Spleen (tissue), 13 donors: ENCODE measurements at regions of chr6 and their contacts with region 1.

Region 1: DNA sequence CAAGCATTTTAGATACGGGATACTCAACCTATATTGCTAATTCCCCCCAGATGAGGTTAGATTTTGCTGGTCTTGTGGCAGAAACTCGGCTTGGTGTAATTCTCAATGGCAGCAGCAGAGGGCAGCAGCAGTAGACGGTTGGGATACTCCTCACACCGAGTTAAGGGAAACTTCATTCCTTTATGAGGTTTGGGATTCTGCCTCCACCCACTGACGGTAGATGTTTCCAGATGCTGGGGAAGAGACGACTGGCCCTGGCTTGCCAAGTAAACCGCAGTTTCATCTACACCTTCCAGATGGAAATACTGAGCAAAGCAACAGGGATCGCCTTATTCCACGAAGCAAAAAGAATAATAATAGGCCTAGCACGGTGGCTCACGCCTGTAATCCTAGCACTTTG is 8.2 kb upstream of the TBC1D7 start:
- DNase-seq: peak; percentile 87
- H3K4me3 ChIP-seq: no peak overlapping the region
- H3K27ac ChIP-seq: peak overlapping the region in 1 of 8 donors; percentile 16
- H3K4me1 ChIP-seq: peaks cover 4 to 55% (median 17%) of the 10 kb centered on the region in 6 donors
- H3K27me3 ChIP-seq: no peaks in the 10 kb centered on the region
- CTCF ChIP-seq: peak; percentile 76 to 98 (median 91)
- POLR2A ChIP-seq: no peak

Region 2: DNA sequence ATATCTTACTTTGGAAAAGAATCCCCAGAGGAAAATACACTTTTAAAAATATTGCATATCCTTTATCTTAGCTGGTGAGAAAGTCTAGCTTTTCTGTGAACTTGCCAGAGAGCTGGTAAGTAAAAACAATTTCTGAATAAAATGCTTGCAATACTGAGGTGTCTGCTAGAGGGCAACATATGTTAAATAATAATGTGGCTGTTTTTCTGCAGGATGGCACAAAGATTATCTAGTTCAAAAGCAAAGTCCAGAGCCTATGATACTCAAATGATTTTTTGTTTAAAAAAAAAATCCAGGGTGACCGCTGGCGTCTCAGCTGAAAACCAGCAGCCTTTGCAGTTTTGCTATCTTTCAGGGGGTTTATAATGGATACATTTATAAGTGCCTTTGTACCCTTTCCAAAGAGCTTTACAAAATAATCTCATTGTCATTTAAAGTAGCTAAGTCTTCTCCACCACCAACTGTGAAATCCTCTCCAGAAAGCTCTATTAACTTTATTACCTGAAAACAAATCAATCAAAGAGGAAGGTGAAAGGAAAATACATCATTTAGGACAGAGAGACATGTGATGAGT is 425.1 kb before region 1 on chr6:
- intact Hi-C with region 1: loop called (anchors 2 kb)
- DNase-seq: no peak
- H3K4me3 ChIP-seq: no peak overlapping the region
- H3K27ac ChIP-seq: no peak overlapping the region
- H3K4me1 ChIP-seq: peaks cover 0 to 4% (median 0%) of the 10 kb centered on the region in 6 donors
- H3K27me3 ChIP-seq: no peaks in the 10 kb centered on the region
- CTCF ChIP-seq: peak in 9 of 11 experiments; percentile 20 to 60 (median 51)
- POLR2A ChIP-seq: no peak

Region 3: GRCh38 chr6:13194852-13195251 is 141.7 kb before region 1 on chr6:
- intact Hi-C with region 1: loop called (anchors 10 kb)
- DNase-seq: no peak
- H3K4me3 ChIP-seq: no peak overlapping the region
- H3K27ac ChIP-seq: no peak overlapping the region
- H3K4me1 ChIP-seq: peaks cover 0 to 9% (median 3%) of the 10 kb centered on the region in 6 donors
- H3K27me3 ChIP-seq: no peaks in the 10 kb centered on the region
- CTCF ChIP-seq: peak in 10 of 11 experiments; percentile 16 to 60 (median 44)
- POLR2A ChIP-seq: no peak

Region 4: GRCh38 chr6:13383328-13384163 is 47.0 kb after region 1 on chr6:
- intact Hi-C with region 1: loop called (anchors 10 kb)
- DNase-seq: no peak
- H3K4me3 ChIP-seq: peak overlapping the region in 1 of 8 donors; percentile 18
- H3K27ac ChIP-seq: peak overlapping the region in 6 of 8 donors; percentile 25 to 74 (median 54)
- H3K4me1 ChIP-seq: peaks cover 14 to 62% (median 26%) of the 10 kb centered on the region in 6 donors
- H3K27me3 ChIP-seq: no peaks in the 10 kb centered on the region
- CTCF ChIP-seq: peak in 7 of 11 experiments; percentile 15 to 53 (median 37)
- POLR2A ChIP-seq: no peak

Region 5: GRCh38 chr6:13487122-13488014 is 150.8 kb after region 1 on chr6 and contains the start of gene GFOD1:
- intact Hi-C with region 1: loop called (anchors 10 kb)
- DNase-seq: peak; percentile 98
- H3K4me3 ChIP-seq: peak within 1 kb of the TSS; percentile 68 to 99 (median 94)
- H3K27ac ChIP-seq: peak within 1 kb of the TSS; percentile 90 to 97 (median 94)
- H3K4me1 ChIP-seq: peaks cover 9 to 58% (median 37%) of the 10 kb centered on the region in 6 donors
- H3K27me3 ChIP-seq: no peaks in the 10 kb centered on the region
- CTCF ChIP-seq: peak in 5 of 11 experiments; percentile 10 to 31 (median 14)
- POLR2A ChIP-seq: peak in 1 of 3 donors; percentile 93
- total RNA-seq, gene GFOD1: 16.0 to 54.0 (median 37.4) TPM

Region 6: DNA sequence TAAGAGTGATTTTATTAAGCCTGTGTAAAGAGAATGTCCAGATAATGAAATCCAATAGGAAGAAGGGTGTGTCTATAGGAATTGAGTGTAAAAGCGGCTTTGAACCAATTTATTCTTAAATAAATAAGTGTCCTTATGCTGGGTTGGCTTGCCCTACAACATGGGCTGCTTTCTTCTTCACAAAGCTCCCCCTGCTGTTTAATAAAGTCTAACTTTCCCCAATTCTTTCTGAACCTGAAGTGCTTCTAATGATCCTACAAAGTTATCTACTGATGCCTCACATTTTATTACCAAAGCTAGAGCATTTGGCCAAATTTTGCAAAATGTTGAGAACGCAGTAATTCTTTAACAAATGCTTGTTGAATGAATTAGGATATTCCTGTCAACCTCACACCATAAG is 201.5 kb after region 1 on chr6:
- intact Hi-C with region 1: loop called (anchors 2 kb)
- DNase-seq: no peak
- H3K4me3 ChIP-seq: no peak overlapping the region
- H3K27ac ChIP-seq: peak overlapping the region in 3 of 8 donors; percentile 3 to 52 (median 23)
- H3K4me1 ChIP-seq: peaks cover 0 to 31% (median 17%) of the 10 kb centered on the region in 6 donors
- H3K27me3 ChIP-seq: no peaks in the 10 kb centered on the region
- CTCF ChIP-seq: peak; percentile 11 to 62 (median 48)
- POLR2A ChIP-seq: no peak